H1 (cell line): ENCODE measurements at regions of chr6 and their contacts with region 1.

Region 1: DNA sequence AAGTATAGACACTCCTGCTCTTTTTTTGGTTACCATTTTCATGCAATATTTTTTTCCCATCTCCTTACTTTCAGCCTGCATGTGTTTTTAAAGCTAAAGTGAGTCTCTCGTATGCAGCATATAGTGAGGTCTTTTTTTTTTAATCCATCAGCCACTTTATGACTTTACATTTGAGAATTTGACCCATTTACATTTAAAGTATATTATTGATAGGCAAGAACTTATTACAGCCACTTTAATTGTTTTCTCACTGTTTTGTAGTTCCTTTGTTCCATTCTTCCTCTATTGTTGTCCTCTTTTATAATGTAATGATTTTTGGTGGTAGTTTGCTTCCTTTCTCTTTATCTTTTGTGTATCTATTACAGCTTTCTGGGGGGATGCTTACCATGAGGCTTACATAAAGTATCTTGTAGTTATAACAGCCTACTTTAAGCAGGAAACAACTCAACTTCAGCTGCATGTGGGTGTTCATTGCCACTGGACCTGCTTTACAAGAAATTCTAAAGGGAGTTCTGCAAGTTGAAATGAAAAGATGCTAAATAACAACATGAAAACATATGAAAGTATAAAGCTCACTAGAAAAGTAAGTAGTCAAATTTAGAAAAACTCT is 71.8 kb downstream of the TNFAIP3 start:
- DNase-seq: no peak
- H3K4me3 ChIP-seq: no peak overlapping the region
- H3K27ac ChIP-seq: no peak overlapping the region
- H3K4me1 ChIP-seq: no peaks in the 10 kb centered on the region
- H3K27me3 ChIP-seq: no peaks in the 10 kb centered on the region
- CTCF ChIP-seq: no peak
- EP300 ChIP-seq: no peak
- POLR2A ChIP-seq: no peak
- RAD21 ChIP-seq: no peak

Region 2: GRCh38 chr6:137602313-137603270 is 336.3 kb before region 1 on chr6:
- CTCF ChIA-PET with region 1: no interaction called
- POLR2A ChIA-PET with region 1: no interaction called
- DNase-seq: no peak
- H3K4me3 ChIP-seq: no peak overlapping the region
- H3K27ac ChIP-seq: no peak overlapping the region
- H3K4me1 ChIP-seq: no peaks in the 10 kb centered on the region; a peak in 1 of 7 replicates
- H3K27me3 ChIP-seq: no peaks in the 10 kb centered on the region
- CTCF ChIP-seq: no peak
- EP300 ChIP-seq: no peak
- POLR2A ChIP-seq: no peak
- RAD21 ChIP-seq: no peak

Region 3: DNA sequence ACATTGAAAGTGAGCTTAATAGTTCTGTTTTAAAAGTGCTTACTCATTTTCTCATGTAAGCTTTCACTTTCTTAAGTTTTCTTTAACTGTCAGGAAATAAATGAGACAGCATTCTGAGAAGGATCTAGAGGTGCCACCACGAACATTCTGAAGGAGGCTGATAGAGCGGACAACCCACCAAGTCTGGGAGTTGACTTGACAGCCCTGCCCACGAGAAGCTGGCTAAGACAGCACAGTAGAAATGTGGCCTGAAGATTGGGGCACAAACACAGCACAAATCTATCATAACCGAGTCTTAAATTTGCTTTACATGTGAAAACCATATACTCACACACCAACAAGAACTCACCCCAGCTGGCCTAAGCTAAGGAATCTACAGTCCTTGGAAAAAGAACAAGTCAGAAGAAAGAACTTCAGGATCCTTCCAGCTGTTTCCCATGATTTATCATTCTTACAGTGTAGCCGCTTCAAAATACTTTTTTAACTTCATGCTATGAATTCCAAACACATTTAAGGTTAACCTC is 216.1 kb before region 1 on chr6:
- CTCF ChIA-PET with region 1: interaction called, 10 read pairs
- POLR2A ChIA-PET with region 1: no interaction called
- DNase-seq: no peak
- H3K4me3 ChIP-seq: no peak overlapping the region
- H3K27ac ChIP-seq: no peak overlapping the region
- H3K4me1 ChIP-seq: no peaks in the 10 kb centered on the region
- H3K27me3 ChIP-seq: no peaks in the 10 kb centered on the region
- CTCF ChIP-seq: no peak
- EP300 ChIP-seq: no peak
- POLR2A ChIP-seq: no peak
- RAD21 ChIP-seq: no peak

Region 4: GRCh38 chr6:137873273-137873762 is 65.6 kb before region 1 on chr6:
- CTCF ChIA-PET with region 1: interaction called, 18 read pairs
- POLR2A ChIA-PET with region 1: interaction called, 3 read pairs
- DNase-seq: no peak
- H3K4me3 ChIP-seq: no peak overlapping the region
- H3K27ac ChIP-seq: no peak overlapping the region
- H3K4me1 ChIP-seq: no peaks in the 10 kb centered on the region
- H3K27me3 ChIP-seq: peaks cover 0 to 1% (median under 1%) of the 10 kb centered on the region in 4 experiments; a peak in 2 of 7 replicates
- CTCF ChIP-seq: no peak
- EP300 ChIP-seq: no peak
- POLR2A ChIP-seq: no peak
- RAD21 ChIP-seq: no peak

Region 5: DNA sequence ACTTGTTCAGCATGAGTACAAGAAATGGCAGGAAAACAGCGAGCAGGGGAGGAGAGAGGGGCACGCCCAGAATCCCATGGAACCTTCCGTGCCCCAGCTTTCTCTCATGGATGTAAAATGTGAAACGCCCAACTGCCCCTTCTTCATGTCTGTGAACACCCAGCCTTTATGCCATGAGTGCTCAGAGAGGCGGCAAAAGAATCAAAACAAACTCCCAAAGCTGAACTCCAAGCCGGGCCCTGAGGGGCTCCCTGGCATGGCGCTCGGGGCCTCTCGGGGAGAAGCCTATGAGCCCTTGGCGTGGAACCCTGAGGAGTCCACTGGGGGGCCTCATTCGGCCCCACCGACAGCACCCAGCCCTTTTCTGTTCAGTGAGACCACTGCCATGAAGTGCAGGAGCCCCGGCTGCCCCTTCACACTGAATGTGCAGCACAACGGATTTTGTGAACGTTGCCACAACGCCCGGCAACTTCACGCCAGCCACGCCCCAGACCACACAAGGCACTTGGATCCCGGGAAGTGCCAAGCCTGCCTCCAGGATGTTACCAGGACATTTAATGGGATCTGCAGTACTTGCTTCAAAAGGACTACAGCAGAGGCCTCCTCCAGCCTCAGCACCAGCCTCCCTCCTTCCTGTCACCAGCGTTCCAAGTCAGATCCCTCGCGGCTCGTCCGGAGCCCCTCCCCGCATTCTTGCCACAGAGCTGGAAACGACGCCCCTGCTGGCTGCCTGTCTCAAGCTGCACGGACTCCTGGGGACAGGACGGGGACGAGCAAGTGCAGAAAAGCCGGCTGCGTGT is 60.2 kb before region 1 on chr6:
- CTCF ChIA-PET with region 1: interaction called, 10 read pairs
- POLR2A ChIA-PET with region 1: no interaction called
- DNase-seq: peak; percentile 25 to 84
- H3K4me3 ChIP-seq: no peak overlapping the region
- H3K27ac ChIP-seq: no peak overlapping the region
- H3K4me1 ChIP-seq: peaks cover 0 to 11% (median 5%) of the 10 kb centered on the region in 4 experiments; a peak in 4 of 7 replicates
- H3K27me3 ChIP-seq: no peaks in the 10 kb centered on the region
- CTCF ChIP-seq: peak; percentile 65 to 78 (median 69)
- EP300 ChIP-seq: no peak
- POLR2A ChIP-seq: no peak
- RAD21 ChIP-seq: peak; percentile 33 to 49; a peak in 3 of 4 replicates

Region 6: GRCh38 chr6:137903933-137904821 is 34.7 kb before region 1 on chr6:
- CTCF ChIA-PET with region 1: no interaction called
- POLR2A ChIA-PET with region 1: no interaction called
- DNase-seq: no peak
- H3K4me3 ChIP-seq: no peak overlapping the region
- H3K27ac ChIP-seq: no peak overlapping the region
- H3K4me1 ChIP-seq: no peaks in the 10 kb centered on the region
- H3K27me3 ChIP-seq: no peaks in the 10 kb centered on the region
- CTCF ChIP-seq: no peak
- EP300 ChIP-seq: no peak
- POLR2A ChIP-seq: no peak
- RAD21 ChIP-seq: no peak

Region 7: GRCh38 chr6:137951064-137951597 is 12.3 kb after region 1 on chr6:
- CTCF ChIA-PET with region 1: interaction called, 26 read pairs
- POLR2A ChIA-PET with region 1: no interaction called
- DNase-seq: no peak
- H3K4me3 ChIP-seq: no peak overlapping the region
- H3K27ac ChIP-seq: no peak overlapping the region
- H3K4me1 ChIP-seq: peaks cover 0 to 3% (median 0%) of the 10 kb centered on the region in 4 experiments; a peak in 1 of 7 replicates
- H3K27me3 ChIP-seq: no peaks in the 10 kb centered on the region
- CTCF ChIP-seq: no peak
- EP300 ChIP-seq: no peak
- POLR2A ChIP-seq: no peak
- RAD21 ChIP-seq: no peak; a peak in 1 of 4 replicates